T-cell (primary cell): ENCODE measurements at regions of chr2 and their contacts with region 1.

Region 1: DNA sequence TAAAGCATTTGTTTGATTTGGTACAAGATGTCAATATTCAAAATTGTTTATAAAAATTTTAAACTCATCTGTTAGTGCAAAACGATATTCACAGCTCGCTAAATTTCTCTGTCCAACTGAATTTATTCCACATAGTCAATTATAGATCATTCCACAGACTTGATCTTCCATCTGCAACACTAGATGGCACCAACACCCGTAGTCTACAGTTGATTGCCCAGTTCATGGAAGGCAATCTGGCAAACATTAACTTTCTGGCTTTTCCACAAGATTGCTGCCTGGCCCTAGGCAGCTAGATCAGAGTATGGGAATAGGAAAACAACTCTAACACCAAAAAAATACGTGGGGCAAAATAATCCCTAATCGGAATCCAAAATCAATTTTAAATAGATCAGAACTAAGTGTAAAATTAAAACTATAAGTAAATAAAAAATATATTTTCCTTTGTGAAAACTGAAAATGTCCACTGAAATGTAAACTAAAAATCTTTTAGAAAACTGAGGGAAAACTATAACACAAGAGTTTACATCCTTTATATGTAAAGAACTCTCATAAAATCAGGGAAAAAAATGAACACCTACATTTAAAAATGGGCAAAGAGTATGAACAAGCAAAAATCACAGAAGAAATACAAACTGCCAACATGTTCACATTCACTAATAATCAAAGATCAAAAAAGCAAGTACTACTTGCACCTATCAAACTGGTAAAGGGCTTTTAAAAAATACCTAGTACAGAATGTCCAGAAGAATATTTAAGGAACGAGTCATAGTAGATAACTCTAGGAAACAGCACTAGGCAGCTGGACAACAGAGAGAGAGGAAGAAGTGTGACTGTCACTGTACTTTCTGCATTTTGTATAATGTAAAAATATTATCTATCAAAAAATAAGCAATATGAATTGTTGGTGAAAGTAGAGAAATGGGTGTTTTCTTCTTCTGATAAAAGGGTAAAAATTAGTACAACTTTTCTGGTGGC is 35.0 kb downstream of the RTN4 start:
- DNase-seq: peak in 28 of 35 experiments; percentile 3 to 72 (median 30)
- ATAC-seq: peak in 1 of 4 experiments; percentile 22
- H3K4me3 ChIP-seq: no peak overlapping the region
- H3K4me3 Mint-ChIP-seq: no peak overlapping the region
- H3K27ac ChIP-seq: no peak overlapping the region
- H3K27ac Mint-ChIP-seq: no peak overlapping the region
- H3K4me1 ChIP-seq: peaks cover 4 to 16% of the 10 kb centered on the region in 2 experiments
- H3K4me1 Mint-ChIP-seq: peaks cover 64 to 73% (median 66%) of the 10 kb centered on the region in 3 donors
- H3K27me3 ChIP-seq: no peaks in the 10 kb centered on the region
- H3K27me3 Mint-ChIP-seq: no peaks in the 10 kb centered on the region

Region 2: DNA sequence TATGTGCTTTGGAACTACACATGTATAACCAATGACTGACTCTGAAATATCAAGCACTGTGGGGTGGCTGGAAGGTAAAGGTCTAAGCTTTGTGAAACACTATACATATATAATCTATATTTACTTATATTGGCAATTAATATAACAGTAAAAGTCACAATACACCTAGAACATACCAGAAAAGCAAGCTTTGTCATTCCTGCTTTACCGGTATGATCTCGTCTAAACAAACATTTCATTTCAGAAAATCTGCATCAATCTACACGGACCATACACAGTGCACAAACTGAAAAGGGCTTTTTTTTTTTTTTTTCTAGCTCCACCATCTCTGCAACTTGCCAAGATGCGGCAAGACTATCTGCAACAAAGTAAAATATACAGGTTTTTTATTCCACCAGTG is 42.8 kb before region 1 on chr2:
- CTCF ChIA-PET with region 1: no interaction called
- POLR2A ChIA-PET with region 1: no interaction called
- DNase-seq: no peak
- ATAC-seq: no peak
- H3K4me3 ChIP-seq: no peak overlapping the region
- H3K4me3 Mint-ChIP-seq: no peak overlapping the region
- H3K27ac ChIP-seq: no peak overlapping the region
- H3K27ac Mint-ChIP-seq: no peak overlapping the region
- H3K4me1 ChIP-seq: no peaks in the 10 kb centered on the region
- H3K4me1 Mint-ChIP-seq: peaks cover 19 to 23% (median 20%) of the 10 kb centered on the region in 3 donors
- H3K27me3 ChIP-seq: no peaks in the 10 kb centered on the region
- H3K27me3 Mint-ChIP-seq: no peaks in the 10 kb centered on the region

Region 3: GRCh38 chr2:55001716-55002115 is 13.5 kb before region 1 on chr2:
- CTCF ChIA-PET with region 1: interaction called in 1 of 2 experiments, 13 read pairs
- POLR2A ChIA-PET with region 1: no interaction called
- DNase-seq: no peak
- ATAC-seq: no peak
- H3K4me3 ChIP-seq: no peak overlapping the region
- H3K4me3 Mint-ChIP-seq: no peak overlapping the region
- H3K27ac ChIP-seq: no peak overlapping the region
- H3K27ac Mint-ChIP-seq: no peak overlapping the region
- H3K4me1 ChIP-seq: peaks cover 0 to 32% of the 10 kb centered on the region in 2 experiments
- H3K4me1 Mint-ChIP-seq: peaks cover 76 to 82% (median 81%) of the 10 kb centered on the region in 3 donors
- H3K27me3 ChIP-seq: no peaks in the 10 kb centered on the region
- H3K27me3 Mint-ChIP-seq: no peaks in the 10 kb centered on the region

Region 4: GRCh38 chr2:55168221-55169154 is 153.2 kb after region 1 on chr2:
- CTCF ChIA-PET with region 1: interaction called, 10 to 15 read pairs
- POLR2A ChIA-PET with region 1: no interaction called
- DNase-seq: peak in 29 of 35 experiments; percentile 4 to 70 (median 20)
- ATAC-seq: peak; percentile 59 to 73 (median 66)
- H3K4me3 ChIP-seq: no peak overlapping the region
- H3K4me3 Mint-ChIP-seq: no peak overlapping the region
- H3K27ac ChIP-seq: no peak overlapping the region
- H3K27ac Mint-ChIP-seq: no peak overlapping the region
- H3K4me1 ChIP-seq: no peaks in the 10 kb centered on the region
- H3K4me1 Mint-ChIP-seq: peaks cover 0 to 4% (median 0%) of the 10 kb centered on the region in 3 donors
- H3K27me3 ChIP-seq: no peaks in the 10 kb centered on the region
- H3K27me3 Mint-ChIP-seq: no peaks in the 10 kb centered on the region

Region 5: GRCh38 chr2:55175254-55176025 is 160.2 kb after region 1 on chr2:
- CTCF ChIA-PET with region 1: interaction called, 10 read pairs
- POLR2A ChIA-PET with region 1: no interaction called
- DNase-seq: peak in 1 of 35 experiments; percentile 67
- ATAC-seq: peak; percentile 70 to 86 (median 78)
- H3K4me3 ChIP-seq: no peak overlapping the region
- H3K4me3 Mint-ChIP-seq: no peak overlapping the region
- H3K27ac ChIP-seq: no peak overlapping the region
- H3K27ac Mint-ChIP-seq: no peak overlapping the region
- H3K4me1 ChIP-seq: no peaks in the 10 kb centered on the region
- H3K4me1 Mint-ChIP-seq: peaks cover 6 to 8% (median 6%) of the 10 kb centered on the region in 3 donors
- H3K27me3 ChIP-seq: no peaks in the 10 kb centered on the region
- H3K27me3 Mint-ChIP-seq: no peaks in the 10 kb centered on the region